Aorta (tissue), 5 donors: ENCODE measurements at regions of chr20 and their contacts with region 1.

Region 1: DNA sequence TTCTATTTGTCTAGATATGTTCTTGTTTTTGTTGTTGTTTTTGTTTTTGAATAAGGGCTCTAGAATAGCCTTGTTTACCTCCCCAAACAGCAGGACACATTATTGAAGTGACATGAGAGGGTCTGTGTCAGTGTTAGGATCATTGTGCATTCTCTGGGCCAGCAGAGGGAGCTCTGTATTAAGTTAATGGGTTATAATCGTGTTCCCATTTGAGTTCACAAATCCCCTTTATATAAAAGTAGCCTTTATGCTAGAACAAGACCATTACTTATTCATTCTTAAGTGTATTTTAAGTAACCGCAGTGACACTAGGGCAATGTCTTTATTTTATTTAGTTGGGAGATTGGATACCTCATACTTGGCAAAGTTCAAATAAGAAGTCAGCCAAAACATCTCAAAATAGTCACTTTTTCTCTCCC is 44.8 kb downstream of the STK4 start:
- DNase-seq: peak in 1 of 2 donors; percentile 59
- ATAC-seq: no peak
- H3K4me3 ChIP-seq: no peak overlapping the region
- H3K27ac ChIP-seq: no peak overlapping the region
- H3K4me1 ChIP-seq: no peaks in the 10 kb centered on the region
- H3K27me3 ChIP-seq: no peaks in the 10 kb centered on the region

Region 2: DNA sequence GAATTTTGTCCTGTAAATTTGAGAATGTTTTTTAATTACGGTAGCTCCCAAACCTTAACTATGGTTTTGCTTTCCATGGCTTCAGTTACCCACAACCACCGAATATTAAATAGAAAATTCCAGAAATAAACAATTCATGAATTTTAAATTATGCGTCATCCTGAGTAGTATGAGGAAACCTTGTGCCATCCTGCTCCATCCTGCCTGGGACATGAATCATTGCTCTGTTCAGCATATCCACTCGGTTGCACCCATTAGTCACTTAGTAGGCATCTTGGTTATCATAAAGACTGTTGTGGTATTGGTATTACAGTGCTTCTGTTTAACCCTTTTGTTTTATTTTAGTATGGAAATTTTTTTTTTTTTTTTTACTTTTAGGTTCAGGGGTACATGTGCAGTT is 50.1 kb after region 1 on chr20:
- intact Hi-C with region 1: no loop called
- DNase-seq: no peak
- ATAC-seq: no peak
- H3K4me3 ChIP-seq: no peak overlapping the region
- H3K27ac ChIP-seq: no peak overlapping the region
- H3K4me1 ChIP-seq: peaks cover 0 to 2% of the 10 kb centered on the region in 2 donors
- H3K27me3 ChIP-seq: no peaks in the 10 kb centered on the region

Region 3: DNA sequence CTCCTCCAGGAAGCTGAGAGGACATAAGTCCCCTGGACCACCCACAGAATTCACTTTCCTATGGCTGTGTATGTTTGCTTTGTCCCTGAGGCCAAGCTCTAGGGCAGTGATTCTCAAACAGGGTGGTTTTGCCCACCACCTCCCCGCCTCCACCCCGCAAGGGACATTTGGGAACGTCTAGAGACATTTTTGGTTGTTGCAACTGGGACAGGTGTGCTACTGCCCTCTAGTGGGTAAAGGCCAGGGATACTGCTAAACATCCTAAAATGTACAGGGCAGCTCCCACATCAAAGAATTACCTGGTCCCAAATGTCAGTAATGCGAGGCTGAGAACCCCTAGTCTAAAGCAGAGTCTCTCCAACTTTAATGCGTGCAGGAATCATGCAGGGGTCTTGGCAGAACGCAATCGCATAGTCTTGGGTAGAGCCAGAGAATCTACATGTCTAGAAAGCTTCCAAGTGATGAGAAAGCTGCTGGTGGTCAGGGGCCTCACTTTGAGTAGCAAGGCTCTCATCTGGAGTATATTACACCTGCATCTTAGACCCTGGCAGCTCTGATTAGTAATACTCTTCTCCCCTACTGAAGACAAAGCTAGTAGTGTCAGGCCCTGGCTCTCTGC is 84.7 kb after region 1 on chr20:
- intact Hi-C with region 1: loop called (anchors 5 to 10 kb)
- DNase-seq: no peak
- ATAC-seq: peak; percentile 66
- H3K4me3 ChIP-seq: no peak overlapping the region
- H3K27ac ChIP-seq: no peak overlapping the region
- H3K4me1 ChIP-seq: no peaks in the 10 kb centered on the region
- H3K27me3 ChIP-seq: peaks cover 0 to 3% of the 10 kb centered on the region in 2 donors

Region 4: DNA sequence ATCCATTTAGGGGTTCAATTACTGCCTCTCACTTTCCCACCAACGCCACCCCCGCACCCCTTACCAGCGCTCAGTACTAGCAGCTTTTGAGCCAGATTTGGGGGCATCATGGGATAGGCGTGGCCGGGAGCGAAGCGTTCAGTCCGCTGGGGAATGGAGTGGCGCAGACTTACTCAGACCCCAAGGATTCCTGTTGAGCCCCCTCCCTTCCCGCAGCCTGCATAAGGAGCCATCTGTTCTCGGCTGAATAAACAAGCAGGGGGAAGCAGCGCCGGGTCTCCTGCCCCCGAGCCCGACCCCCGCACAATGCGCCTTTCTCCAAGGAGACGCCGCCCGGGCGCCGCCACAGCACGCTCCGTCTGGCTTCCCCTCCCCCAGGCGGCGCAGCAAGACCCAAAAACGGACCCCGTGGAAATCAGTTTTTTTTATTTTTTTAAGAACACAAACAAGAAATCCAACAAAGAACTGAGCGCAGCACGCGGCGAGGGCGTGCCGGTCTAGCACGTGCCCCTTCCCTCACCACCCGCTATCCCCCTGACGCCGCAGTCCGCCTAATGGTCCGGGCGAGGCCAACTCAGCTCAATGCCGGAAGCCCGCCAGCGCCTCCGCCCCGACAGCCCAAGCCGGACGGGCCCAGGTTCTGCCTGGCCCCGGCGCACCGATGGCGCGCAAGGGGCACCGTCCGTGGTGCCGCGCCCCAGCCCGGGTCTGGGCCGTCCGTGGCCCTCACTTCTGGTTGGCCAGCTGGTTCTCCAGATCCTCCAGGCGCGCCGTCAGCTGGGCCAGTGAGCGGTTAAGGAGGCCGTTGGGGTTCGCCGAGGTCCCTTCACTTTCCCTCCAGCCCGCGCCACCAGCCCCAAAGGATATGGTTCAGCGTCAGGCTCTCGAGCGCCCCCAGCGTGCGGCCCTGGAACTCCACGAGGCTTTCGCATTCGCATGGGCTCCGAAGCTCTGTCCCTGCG is 282.2 kb after region 1 on chr20:
- intact Hi-C with region 1: loop called in 1 of 2 experiments (anchors 5 kb)
- DNase-seq: peak; percentile 86 to 97
- ATAC-seq: peak; percentile 83
- H3K4me3 ChIP-seq: peak overlapping the region; percentile 11 to 18
- H3K27ac ChIP-seq: no peak overlapping the region
- H3K4me1 ChIP-seq: no peaks in the 10 kb centered on the region
- H3K27me3 ChIP-seq: no peaks in the 10 kb centered on the region